ENCODE measurements at regions of chr17 and their contacts with region 1.

Region 1: GRCh38 chr17:30124273-30124796 is 7.7 kb downstream of the NSRP1 start:
- DNase-seq: no peak
- H3K4me3 ChIP-seq: no peak overlapping the region
- H3K27ac ChIP-seq: no peak overlapping the region
- H3K4me1 ChIP-seq: no peaks in the 10 kb centered on the region
- H3K27me3 ChIP-seq: no peaks in the 10 kb centered on the region
- CTCF ChIP-seq: no peak
- EP300 ChIP-seq: no peak
- POLR2A ChIP-seq: no peak
- RAD21 ChIP-seq: no peak

Region 2: DNA sequence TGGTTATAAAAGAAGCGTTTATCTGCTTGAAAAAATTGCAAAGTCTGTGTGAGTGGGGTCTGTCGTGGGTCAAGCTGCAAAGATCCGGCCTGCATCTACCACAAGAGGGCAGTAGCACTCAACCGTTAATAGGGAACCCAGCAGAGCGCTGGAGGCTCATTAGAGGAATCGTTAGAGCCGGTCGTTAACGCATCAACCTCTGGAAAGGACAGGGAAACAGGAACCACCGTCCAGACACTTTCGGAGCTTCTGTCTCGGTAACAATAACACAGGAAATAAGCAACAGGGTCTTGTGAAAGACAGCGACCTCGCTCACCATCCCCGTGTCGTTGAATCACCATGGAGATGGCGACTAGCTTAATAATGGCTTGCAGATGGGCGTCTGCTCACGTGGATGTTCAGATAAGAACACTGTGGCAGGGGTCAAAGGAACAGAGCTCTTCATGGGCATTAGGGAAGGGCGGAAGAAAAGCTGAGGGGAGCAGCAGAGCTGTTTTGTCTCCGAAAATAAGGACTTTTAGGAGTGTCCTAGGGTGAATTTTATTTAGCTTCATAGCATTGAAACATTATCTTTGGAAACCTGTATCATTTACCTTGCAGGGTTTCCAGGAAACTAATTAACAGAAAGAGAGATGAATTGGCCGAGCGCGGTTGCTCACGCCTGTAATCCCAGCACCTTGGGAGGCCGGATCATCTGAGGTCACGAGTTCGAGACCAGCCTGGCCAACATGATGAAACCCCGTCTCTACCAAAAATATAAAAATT is 19.6 kb before region 1 on chr17:
- CTCF ChIA-PET with region 1: interaction called, 19 read pairs
- POLR2A ChIA-PET with region 1: interaction called, 3 read pairs
- DNase-seq: peak; percentile 56 to 77
- H3K4me3 ChIP-seq: peak overlapping the region; percentile 28 to 61 (median 52); a peak in 7 of 8 replicates
- H3K27ac ChIP-seq: no peak overlapping the region
- H3K4me1 ChIP-seq: no peaks in the 10 kb centered on the region
- H3K27me3 ChIP-seq: no peaks in the 10 kb centered on the region
- CTCF ChIP-seq: peak; percentile 80 to 88 (median 81)
- EP300 ChIP-seq: no peak
- POLR2A ChIP-seq: peak; percentile 37 to 47; a peak in 2 of 3 replicates
- RAD21 ChIP-seq: peak; percentile 79 to 86

Region 3: GRCh38 chr17:30113213-30113612 is 11.1 kb before region 1 on chr17:
- CTCF ChIA-PET with region 1: interaction called, 12 read pairs
- POLR2A ChIA-PET with region 1: interaction called, 7 read pairs
- DNase-seq: no peak
- H3K4me3 ChIP-seq: no peak overlapping the region
- H3K27ac ChIP-seq: no peak overlapping the region
- H3K4me1 ChIP-seq: no peaks in the 10 kb centered on the region
- H3K27me3 ChIP-seq: no peaks in the 10 kb centered on the region
- CTCF ChIP-seq: no peak
- EP300 ChIP-seq: no peak
- POLR2A ChIP-seq: no peak
- RAD21 ChIP-seq: no peak

Region 4: GRCh38 chr17:30134551-30134950 is 10.2 kb after region 1 on chr17:
- CTCF ChIA-PET with region 1: interaction called, 11 read pairs
- POLR2A ChIA-PET with region 1: interaction called, 10 read pairs
- DNase-seq: no peak
- H3K4me3 ChIP-seq: no peak overlapping the region
- H3K27ac ChIP-seq: no peak overlapping the region
- H3K4me1 ChIP-seq: peaks cover 0 to 4% (median 1%) of the 10 kb centered on the region in 4 experiments; a peak in 2 of 7 replicates
- H3K27me3 ChIP-seq: no peaks in the 10 kb centered on the region
- CTCF ChIP-seq: no peak
- EP300 ChIP-seq: no peak
- POLR2A ChIP-seq: no peak
- RAD21 ChIP-seq: no peak

Region 5: GRCh38 chr17:30203471-30203981 is 79.2 kb after region 1 on chr17:
- CTCF ChIA-PET with region 1: interaction called, 26 read pairs
- POLR2A ChIA-PET with region 1: interaction called, 3 read pairs
- DNase-seq: peak; percentile 21 to 56
- H3K4me3 ChIP-seq: no peak overlapping the region
- H3K27ac ChIP-seq: no peak overlapping the region
- H3K4me1 ChIP-seq: no peaks in the 10 kb centered on the region
- H3K27me3 ChIP-seq: no peaks in the 10 kb centered on the region
- CTCF ChIP-seq: peak; percentile 57 to 71 (median 67)
- EP300 ChIP-seq: no peak
- POLR2A ChIP-seq: no peak
- RAD21 ChIP-seq: peak; percentile 54 to 63

Region 6: GRCh38 chr17:30236766-30237165 is 112.4 kb after region 1 on chr17:
- CTCF ChIA-PET with region 1: interaction called, 36 read pairs
- POLR2A ChIA-PET with region 1: interaction called, 4 read pairs
- DNase-seq: peak; percentile 19 to 84
- H3K4me3 ChIP-seq: peak overlapping the region in 1 of 4 experiments; percentile 63; a peak in 3 of 8 replicates
- H3K27ac ChIP-seq: no peak overlapping the region
- H3K4me1 ChIP-seq: peaks cover 0 to 18% (median 15%) of the 10 kb centered on the region in 4 experiments; a peak in 5 of 7 replicates
- H3K27me3 ChIP-seq: peaks cover 32 to 63% (median 58%) of the 10 kb centered on the region in 4 experiments
- CTCF ChIP-seq: peak; percentile 43 to 62 (median 61)
- EP300 ChIP-seq: no peak
- POLR2A ChIP-seq: no peak
- RAD21 ChIP-seq: peak; percentile 57 to 76; a peak in 3 of 4 replicates

Region 7: GRCh38 chr17:30336369-30337171 is 212.2 kb after region 1 on chr17:
- CTCF ChIA-PET with region 1: interaction called, 19 read pairs
- POLR2A ChIA-PET with region 1: interaction called, 3 read pairs
- DNase-seq: peak; percentile 9 to 63
- H3K4me3 ChIP-seq: no peak overlapping the region
- H3K27ac ChIP-seq: no peak overlapping the region
- H3K4me1 ChIP-seq: peaks cover 0 to 4% (median 1%) of the 10 kb centered on the region in 4 experiments; a peak in 3 of 7 replicates
- H3K27me3 ChIP-seq: no peaks in the 10 kb centered on the region
- CTCF ChIP-seq: peak in 2 of 3 experiments; percentile 70 to 71; a peak in 3 of 4 replicates
- EP300 ChIP-seq: no peak
- POLR2A ChIP-seq: no peak
- RAD21 ChIP-seq: peak; percentile 76

Measured in H1 (cell line).